ENCODE measurements at regions of chr5 and their contacts with region 1.

Region 1: DNA sequence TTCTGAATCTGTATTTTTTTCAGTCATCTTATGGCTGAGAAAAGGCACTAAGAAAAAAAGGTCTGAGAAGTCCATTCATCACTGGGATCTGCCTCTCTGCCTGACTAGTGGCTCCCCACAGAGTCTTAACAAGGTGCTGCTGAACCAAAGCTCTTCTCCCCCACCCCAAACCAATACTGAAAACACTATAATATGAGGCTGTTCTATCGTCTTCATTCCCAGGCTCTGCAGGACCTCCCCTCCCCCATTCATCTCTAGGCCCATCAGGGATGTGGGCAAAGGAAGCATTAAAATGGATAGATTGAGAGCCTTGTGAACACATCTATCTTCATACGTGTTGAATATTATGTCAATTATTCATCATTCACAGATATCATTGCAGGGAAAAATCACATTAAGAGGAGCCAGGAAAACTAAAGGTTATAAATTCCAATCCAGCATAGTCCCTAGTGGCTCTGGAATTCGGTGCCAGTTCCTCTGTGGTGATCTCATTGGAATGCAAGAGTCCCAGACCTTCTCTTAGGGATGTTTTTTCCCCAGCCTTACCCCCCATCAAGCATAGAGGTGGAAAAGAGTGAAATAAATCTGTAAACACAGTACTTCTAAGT is 44.3 kb upstream of the GPR151 start:
- DNase-seq: no peak
- ATAC-seq: no peak
- H3K4me3 ChIP-seq: no peak overlapping the region
- H3K4me3 Mint-ChIP-seq: no peak overlapping the region
- H3K27ac ChIP-seq: no peak overlapping the region
- H3K27ac Mint-ChIP-seq: no peak overlapping the region
- H3K4me1 ChIP-seq: no peaks in the 10 kb centered on the region
- H3K4me1 Mint-ChIP-seq: no peaks in the 10 kb centered on the region
- H3K27me3 ChIP-seq: no peaks in the 10 kb centered on the region
- H3K27me3 Mint-ChIP-seq: peaks cover 2% of the 10 kb centered on the region
- CTCF ChIP-seq: no peak

Region 2: DNA sequence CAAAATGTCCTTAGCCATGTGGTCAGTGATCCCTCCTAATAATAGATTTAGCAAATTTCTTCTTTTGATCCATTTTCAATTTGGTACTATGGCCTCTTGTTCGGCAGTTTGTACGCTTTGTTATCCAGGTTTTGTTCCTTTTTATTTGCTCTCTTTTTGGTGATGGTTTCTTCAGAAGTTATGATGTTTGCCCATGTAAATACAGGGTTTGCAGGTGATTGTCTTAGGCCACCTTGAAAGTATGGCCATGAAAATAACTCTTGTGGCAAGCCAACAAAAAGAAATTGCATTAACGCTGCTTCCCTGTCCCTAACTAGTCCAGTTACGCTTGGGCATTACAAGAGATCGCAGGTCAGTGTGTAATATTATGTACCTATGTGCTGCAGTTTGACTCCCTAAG is 52.9 kb before region 1 on chr5:
- CTCF ChIA-PET with region 1: no interaction called
- POLR2A ChIA-PET with region 1: no interaction called
- intact Hi-C with region 1: no loop called
- DNase-seq: no peak
- ATAC-seq: no peak
- H3K4me3 ChIP-seq: no peak overlapping the region
- H3K4me3 Mint-ChIP-seq: no peak overlapping the region
- H3K27ac ChIP-seq: no peak overlapping the region
- H3K27ac Mint-ChIP-seq: peak overlapping the region; percentile 25
- H3K4me1 ChIP-seq: no peaks in the 10 kb centered on the region
- H3K4me1 Mint-ChIP-seq: no peaks in the 10 kb centered on the region
- H3K27me3 ChIP-seq: no peaks in the 10 kb centered on the region
- H3K27me3 Mint-ChIP-seq: no peaks in the 10 kb centered on the region
- CTCF ChIP-seq: no peak

Region 3: DNA sequence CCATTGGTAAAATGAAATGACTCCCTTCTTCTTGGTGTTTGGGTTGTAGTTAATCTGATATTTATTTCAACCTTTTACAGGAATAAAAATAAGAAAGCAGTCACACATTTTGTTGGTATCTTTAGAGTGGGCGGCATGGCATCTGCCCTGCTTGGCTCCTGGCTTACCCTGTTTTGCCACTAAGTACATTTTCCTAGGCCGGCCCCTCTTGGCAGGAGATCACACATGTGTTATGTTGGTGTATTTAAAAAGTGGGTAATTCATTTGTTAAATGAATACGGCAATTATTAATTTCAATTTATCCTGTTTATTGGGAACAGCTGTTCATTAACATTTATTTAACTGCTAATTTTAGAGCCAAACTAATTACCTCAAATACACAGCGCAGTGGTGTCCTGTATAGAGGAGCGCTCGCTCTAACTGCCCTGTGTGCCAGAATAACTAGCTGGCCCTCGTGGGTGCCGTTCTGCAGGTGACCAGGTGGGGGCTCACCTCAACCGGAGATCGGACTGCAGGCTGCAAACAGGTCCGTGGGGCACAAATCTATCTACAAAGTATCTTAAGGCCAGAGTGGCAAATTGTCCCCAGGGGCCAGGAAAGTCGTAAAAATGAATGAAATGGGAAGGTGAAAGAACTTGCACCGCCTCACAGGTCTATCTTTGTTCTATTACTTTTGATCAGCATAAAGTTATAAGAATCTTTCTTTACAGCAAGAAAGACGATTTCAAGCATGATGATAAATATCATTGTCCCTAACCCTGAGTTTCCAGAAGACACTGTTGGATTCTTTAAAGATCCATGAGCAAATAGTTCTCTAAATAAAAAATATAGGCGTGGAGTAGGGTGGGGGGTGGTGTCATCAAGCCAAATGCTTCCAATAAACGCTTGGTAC is 18.1 kb before region 1 on chr5:
- CTCF ChIA-PET with region 1: interaction called, 10 read pairs
- POLR2A ChIA-PET with region 1: no interaction called
- intact Hi-C with region 1: no loop called
- DNase-seq: peak; percentile 46 to 80 (median 67)
- ATAC-seq: peak; percentile 85
- H3K4me3 ChIP-seq: no peak overlapping the region
- H3K4me3 Mint-ChIP-seq: no peak overlapping the region
- H3K27ac ChIP-seq: no peak overlapping the region
- H3K27ac Mint-ChIP-seq: no peak overlapping the region
- H3K4me1 ChIP-seq: no peaks in the 10 kb centered on the region
- H3K4me1 Mint-ChIP-seq: no peaks in the 10 kb centered on the region
- H3K27me3 ChIP-seq: no peaks in the 10 kb centered on the region
- H3K27me3 Mint-ChIP-seq: no peaks in the 10 kb centered on the region
- CTCF ChIP-seq: peak; percentile 95

Measured in CD8-positive, alpha-beta T cell (primary cell).